ENCODE measurements at regions of chr20 and their contacts with region 1.

Region 1: DNA sequence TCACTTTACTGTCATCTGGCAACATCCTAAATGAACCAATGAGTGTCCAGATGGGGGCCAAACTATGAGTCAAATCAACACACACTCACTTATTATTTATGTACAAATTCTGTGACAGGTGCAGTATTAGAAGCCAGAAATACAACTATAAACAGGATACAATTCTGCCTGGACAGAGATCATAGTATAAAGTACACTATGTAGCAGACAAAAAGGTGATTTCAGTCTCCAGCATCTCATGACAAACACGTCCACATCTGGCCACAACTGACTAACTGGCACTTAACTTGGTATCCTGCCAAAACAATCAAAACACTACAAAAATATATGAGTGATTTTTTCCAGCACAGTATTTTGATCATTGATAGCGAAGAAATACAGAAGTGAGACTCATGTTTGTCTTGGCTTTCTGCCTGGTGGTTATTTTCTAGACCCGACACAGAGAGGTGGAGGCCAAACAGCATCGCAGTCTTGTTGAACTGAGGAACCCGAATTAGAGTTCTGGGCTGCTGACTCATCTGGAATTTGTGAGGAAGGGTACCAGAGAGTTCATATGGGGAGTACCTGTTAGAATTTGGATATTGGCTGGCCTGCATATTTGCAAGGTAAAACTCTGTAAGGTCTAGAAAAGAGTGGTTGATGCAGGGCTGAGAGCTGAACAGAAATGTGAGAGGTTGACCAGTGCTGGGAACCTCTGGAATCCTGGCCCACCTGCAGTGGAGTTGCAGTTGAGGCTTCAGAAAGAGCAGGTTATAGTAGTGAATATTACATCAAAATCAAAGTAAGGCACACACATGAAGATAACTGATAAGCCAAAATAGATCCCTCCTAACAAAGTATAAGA is 475.2 kb downstream of the PTPRT start:
- DNase-seq: no peak
- H3K4me3 ChIP-seq: no peak overlapping the region
- H3K27ac ChIP-seq: no peak overlapping the region
- H3K4me1 ChIP-seq: no peaks in the 10 kb centered on the region
- H3K27me3 ChIP-seq: no peaks in the 10 kb centered on the region
- CTCF ChIP-seq: no peak
- EP300 ChIP-seq: no peak
- POLR2A ChIP-seq: no peak

Region 2: DNA sequence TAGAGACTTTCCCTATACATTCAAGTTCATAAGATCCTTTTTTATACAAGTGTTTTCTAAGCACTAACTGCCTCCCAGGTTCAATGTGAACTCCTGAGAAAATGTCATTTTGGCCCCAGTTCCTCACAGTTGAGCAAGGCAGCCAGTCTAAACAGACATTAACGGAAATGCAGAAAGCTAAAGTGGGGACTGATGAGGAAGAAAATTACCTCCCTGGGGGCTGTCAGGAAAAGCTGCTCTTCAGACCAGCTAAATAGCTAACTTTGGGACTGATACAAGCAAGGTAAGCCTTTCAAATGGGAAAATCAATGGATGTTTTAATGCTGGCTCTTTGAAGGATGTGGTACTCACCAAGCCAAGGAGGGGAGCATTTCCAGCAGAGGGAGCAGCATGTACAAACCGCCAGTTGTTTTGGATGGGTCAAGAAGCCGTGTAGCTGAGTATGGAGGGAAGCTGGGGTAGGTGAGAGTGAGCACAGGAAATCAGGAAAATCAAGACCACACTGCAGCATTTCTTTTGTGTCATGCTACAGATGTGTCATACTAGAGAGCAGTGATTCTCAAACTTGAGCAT is 915.5 kb before region 1 on chr20:
- intact Hi-C with region 1: loop called in 1 of 4 experiments (anchors 5 kb)
- DNase-seq: no peak
- H3K4me3 ChIP-seq: no peak overlapping the region
- H3K27ac ChIP-seq: no peak overlapping the region
- H3K4me1 ChIP-seq: no peaks in the 10 kb centered on the region
- H3K27me3 ChIP-seq: no peaks in the 10 kb centered on the region
- CTCF ChIP-seq: no peak
- EP300 ChIP-seq: no peak
- POLR2A ChIP-seq: no peak

Region 3: GRCh38 chr20:42763015-42763414 is 48.5 kb after region 1 on chr20:
- intact Hi-C with region 1: no loop called
- DNase-seq: no peak
- H3K4me3 ChIP-seq: no peak overlapping the region
- H3K27ac ChIP-seq: no peak overlapping the region
- H3K4me1 ChIP-seq: no peaks in the 10 kb centered on the region
- H3K27me3 ChIP-seq: no peaks in the 10 kb centered on the region
- CTCF ChIP-seq: no peak
- EP300 ChIP-seq: no peak
- POLR2A ChIP-seq: no peak

Measured in ovary (tissue), 10 donors.